Endothelial cell of umbilical vein (primary cell): ENCODE measurements at regions of chr20 and their contacts with region 1.

Region 1: GRCh38 chr20:31723319-31724078 is 831 bp upstream of the BCL2L1 start:
- DNase-seq: peak; percentile 98
- H3K4me3 ChIP-seq: peak overlapping the region; percentile 61 to 94 (median 91)
- H3K27ac ChIP-seq: peak overlapping the region; percentile 90
- H3K4me1 ChIP-seq: peaks cover 23% of the 10 kb centered on the region
- H3K27me3 ChIP-seq: no peaks in the 10 kb centered on the region
- CTCF ChIP-seq: peak; percentile 84 to 93
- POLR2A ChIP-seq: no peak

Region 2: GRCh38 chr20:31605031-31605901 is 118.2 kb before region 1 on chr20 and contains the start of gene ID1:
- CTCF ChIA-PET with region 1: interaction called, 42 read pairs
- POLR2A ChIA-PET with region 1: no interaction called
- dilution Hi-C with region 1: no loop called
- intact Hi-C with region 1: no loop called
- DNase-seq: peak; percentile 95
- H3K4me3 ChIP-seq: peak within 1 kb of the TSS; percentile 44 to 94 (median 68)
- H3K27ac ChIP-seq: peak within 1 kb of the TSS; percentile 100
- H3K4me1 ChIP-seq: peaks cover 51% of the 10 kb centered on the region
- H3K27me3 ChIP-seq: no peaks in the 10 kb centered on the region
- CTCF ChIP-seq: no peak
- POLR2A ChIP-seq: peak; percentile 99
- total RNA-seq, gene ID1: 64.4 and 78.9 TPM in 2 replicates

Region 3: DNA sequence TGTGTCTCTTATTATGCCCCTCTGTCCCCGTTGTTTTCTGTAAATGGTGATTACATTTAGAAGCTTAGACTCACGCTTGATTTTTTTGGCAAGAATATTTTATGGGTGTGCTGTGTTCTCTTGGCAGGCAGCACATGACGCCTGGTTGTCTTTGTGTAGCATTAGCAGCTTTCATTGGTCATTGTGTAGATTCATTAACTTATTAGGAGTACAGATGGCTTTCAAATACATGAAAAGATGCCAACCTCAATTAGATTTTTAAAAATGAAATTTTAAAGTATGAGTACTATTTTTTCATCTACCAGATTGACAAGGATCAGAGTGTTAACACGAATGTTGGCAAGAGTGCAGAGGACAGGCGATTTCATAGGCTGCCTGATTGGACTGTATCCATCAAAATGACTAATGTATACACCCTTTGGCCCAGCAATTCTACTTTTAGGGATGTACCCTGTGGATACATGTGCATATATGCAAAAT is 70.5 kb before region 1 on chr20:
- CTCF ChIA-PET with region 1: interaction called, 658 read pairs
- POLR2A ChIA-PET with region 1: no interaction called
- dilution Hi-C with region 1: no loop called
- intact Hi-C with region 1: no loop called
- DNase-seq: peak; percentile 20
- H3K4me3 ChIP-seq: no peak overlapping the region
- H3K27ac ChIP-seq: no peak overlapping the region
- H3K4me1 ChIP-seq: no peaks in the 10 kb centered on the region
- H3K27me3 ChIP-seq: peaks cover 0 to 1% of the 10 kb centered on the region in 2 experiments
- CTCF ChIP-seq: no peak
- POLR2A ChIP-seq: no peak

Region 4: GRCh38 chr20:31684153-31685015 is 39.1 kb before region 1 on chr20:
- CTCF ChIA-PET with region 1: interaction called, 51 read pairs
- POLR2A ChIA-PET with region 1: no interaction called
- dilution Hi-C with region 1: no loop called
- intact Hi-C with region 1: no loop called
- DNase-seq: no peak
- H3K4me3 ChIP-seq: no peak overlapping the region
- H3K27ac ChIP-seq: no peak overlapping the region
- H3K4me1 ChIP-seq: peaks cover 14% of the 10 kb centered on the region
- H3K27me3 ChIP-seq: no peaks in the 10 kb centered on the region
- CTCF ChIP-seq: no peak
- POLR2A ChIP-seq: no peak

Region 5: DNA sequence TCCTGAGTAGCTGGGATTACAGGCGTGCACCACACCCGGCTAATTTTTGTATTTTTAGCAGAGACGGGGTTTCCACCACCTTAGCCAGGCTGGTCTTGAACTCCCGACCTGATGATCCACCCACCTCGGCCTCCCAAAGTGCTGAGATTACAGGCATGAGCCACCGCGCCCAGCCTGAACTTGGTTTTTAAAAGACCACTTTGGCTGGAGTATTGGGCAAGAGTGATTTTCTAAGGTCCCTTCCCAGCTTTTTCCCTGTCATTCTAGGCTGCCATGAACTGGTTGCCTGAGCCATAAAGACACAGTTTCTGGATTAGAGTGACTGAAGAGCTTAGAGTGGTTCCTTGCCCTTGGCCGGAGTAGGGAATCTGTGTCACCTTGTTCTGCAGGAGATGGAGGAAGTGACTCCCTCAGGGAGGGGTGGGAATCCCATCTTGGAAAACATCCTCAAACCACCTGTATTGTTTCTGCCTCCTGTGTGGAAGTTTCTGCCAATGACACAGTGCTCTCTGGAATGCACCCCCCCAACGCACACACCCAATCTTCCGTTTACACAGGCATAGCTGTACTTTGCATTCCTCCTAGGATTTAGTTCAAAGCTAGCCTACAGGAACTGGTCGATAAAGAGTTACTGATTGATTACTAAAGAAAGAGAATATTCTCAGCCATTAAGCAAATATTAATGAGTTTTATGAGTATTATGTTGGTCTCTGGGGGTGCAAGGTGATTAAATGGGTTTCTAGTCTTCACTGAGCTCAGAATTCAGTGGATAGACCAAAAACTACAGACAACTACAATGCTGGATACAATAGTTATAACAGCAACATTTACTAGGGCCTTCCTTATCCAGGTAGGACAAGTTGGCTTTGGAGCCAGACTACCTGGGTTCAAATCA is 19.0 kb before region 1 on chr20:
- CTCF ChIA-PET with region 1: interaction called, 47 read pairs
- POLR2A ChIA-PET with region 1: interaction called, 11 read pairs
- dilution Hi-C with region 1: no loop called
- intact Hi-C with region 1: loop called (anchors 1 kb)
- DNase-seq: peak; percentile 54
- H3K4me3 ChIP-seq: no peak overlapping the region
- H3K27ac ChIP-seq: peak overlapping the region; percentile 77
- H3K4me1 ChIP-seq: peaks cover 30% of the 10 kb centered on the region
- H3K27me3 ChIP-seq: no peaks in the 10 kb centered on the region
- CTCF ChIP-seq: no peak
- POLR2A ChIP-seq: no peak

Region 6: GRCh38 chr20:31770243-31770642 is 46.7 kb after region 1 on chr20:
- CTCF ChIA-PET with region 1: no interaction called
- POLR2A ChIA-PET with region 1: no interaction called
- dilution Hi-C with region 1: no loop called
- intact Hi-C with region 1: no loop called
- DNase-seq: no peak
- H3K4me3 ChIP-seq: no peak overlapping the region
- H3K27ac ChIP-seq: no peak overlapping the region
- H3K4me1 ChIP-seq: no peaks in the 10 kb centered on the region
- H3K27me3 ChIP-seq: no peaks in the 10 kb centered on the region
- CTCF ChIP-seq: no peak
- POLR2A ChIP-seq: no peak

Region 7: GRCh38 chr20:31951530-31952453 is 228.3 kb after region 1 on chr20 and contains the start of gene PDRG1:
- CTCF ChIA-PET with region 1: no interaction called
- POLR2A ChIA-PET with region 1: no interaction called
- dilution Hi-C with region 1: no loop called
- intact Hi-C with region 1: no loop called
- DNase-seq: peak; percentile 98
- H3K4me3 ChIP-seq: peak within 1 kb of the TSS; percentile 97 to 99 (median 97)
- H3K27ac ChIP-seq: peak within 1 kb of the TSS; percentile 85
- H3K4me1 ChIP-seq: peaks cover 7% of the 10 kb centered on the region
- H3K27me3 ChIP-seq: peaks cover 0 to 3% of the 10 kb centered on the region in 2 experiments
- CTCF ChIP-seq: peak; percentile 97 to 98
- POLR2A ChIP-seq: peak; percentile 84
- total RNA-seq, gene PDRG1: 12.6 and 14.6 TPM in 2 replicates

Region 8: GRCh38 chr20:32646486-32646885 is 923.0 kb after region 1 on chr20:
- CTCF ChIA-PET with region 1: no interaction called
- POLR2A ChIA-PET with region 1: no interaction called
- dilution Hi-C with region 1: no loop called
- intact Hi-C with region 1: no loop called
- DNase-seq: no peak
- H3K4me3 ChIP-seq: no peak overlapping the region
- H3K27ac ChIP-seq: no peak overlapping the region
- H3K4me1 ChIP-seq: no peaks in the 10 kb centered on the region
- H3K27me3 ChIP-seq: no peaks in the 10 kb centered on the region
- CTCF ChIP-seq: no peak
- POLR2A ChIP-seq: no peak